ENCODE measurements at regions of chr14 and their contacts with region 1.

Region 1: GRCh38 chr14:22570132-22570949 is 18.7 kb downstream of the DAD1 start:
- DNase-seq: peak in 1 of 2 donors; percentile 82
- H3K4me3 ChIP-seq: no peak overlapping the region
- H3K27ac ChIP-seq: peak overlapping the region in 1 of 2 donors; percentile 51
- H3K4me1 ChIP-seq: peaks cover 0 to 23% (median 13%) of the 10 kb centered on the region in 4 donors
- H3K27me3 ChIP-seq: no peaks in the 10 kb centered on the region
- CTCF ChIP-seq: peak; percentile 74 to 90

Region 2: DNA sequence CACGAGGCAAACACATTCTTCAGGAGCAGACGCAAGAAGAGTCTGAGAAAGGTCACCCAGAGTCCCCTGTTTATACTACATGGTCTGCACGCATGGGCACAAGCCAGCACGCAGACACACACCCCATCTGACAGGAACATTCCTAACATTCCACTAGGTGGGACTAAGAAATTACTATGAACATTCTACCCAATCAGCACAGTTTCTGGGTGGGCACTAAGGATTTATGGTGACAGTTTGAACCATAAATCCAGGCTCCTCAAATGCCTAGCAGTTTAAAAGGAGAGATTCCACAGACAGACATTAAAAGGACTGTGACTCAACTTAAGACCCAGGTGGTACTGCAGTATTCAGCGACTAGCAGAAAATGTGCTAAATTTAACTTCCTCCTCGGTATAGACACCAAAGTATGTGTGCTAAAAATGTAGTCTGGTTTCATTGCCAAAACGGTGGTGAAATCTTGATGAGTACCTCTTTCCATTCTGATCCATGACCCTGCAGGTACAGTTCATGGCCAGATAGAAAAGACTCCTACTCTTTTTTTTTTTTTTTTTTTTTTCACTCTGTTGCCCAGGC is 44.0 kb after region 1 on chr14:
- intact Hi-C with region 1: no loop called
- DNase-seq: no peak
- H3K4me3 ChIP-seq: no peak overlapping the region
- H3K27ac ChIP-seq: peak overlapping the region; percentile 55 to 65
- H3K4me1 ChIP-seq: peaks cover 0 to 22% (median 14%) of the 10 kb centered on the region in 4 donors
- H3K27me3 ChIP-seq: no peaks in the 10 kb centered on the region
- CTCF ChIP-seq: no peak

Region 3: DNA sequence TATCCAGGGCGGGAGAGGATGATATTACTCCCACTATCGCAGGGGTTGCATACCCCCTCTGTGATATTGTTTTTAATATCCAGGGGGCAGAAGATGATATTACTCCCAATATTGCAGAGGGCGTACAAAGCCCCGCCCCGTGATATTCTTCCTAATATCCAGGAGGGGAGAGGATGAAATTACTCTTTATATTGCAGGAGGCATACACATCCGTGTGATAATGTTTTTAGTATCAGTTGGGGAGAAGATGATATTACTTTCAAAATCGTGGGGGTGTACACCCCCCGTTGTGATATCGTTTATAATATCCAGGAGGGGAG is 143.2 kb after region 1 on chr14:
- intact Hi-C with region 1: loop called (anchors 5 kb)
- DNase-seq: no peak
- H3K4me3 ChIP-seq: peak overlapping the region; percentile 26 to 38
- H3K27ac ChIP-seq: no peak overlapping the region
- H3K4me1 ChIP-seq: peaks cover 0 to 7% (median 0%) of the 10 kb centered on the region in 4 donors
- H3K27me3 ChIP-seq: peaks cover 0 to 26% of the 10 kb centered on the region in 2 donors
- CTCF ChIP-seq: no peak